CD4-positive, alpha-beta T cell (primary cell): ENCODE measurements at regions of chrX and their contacts with region 1.

Region 1: GRCh38 chrX:130268500-130269170 is at the start of gene ZNF280C:
- DNase-seq: peak; percentile 78 to 95 (median 87)
- ATAC-seq: peak; percentile 96
- H3K4me3 ChIP-seq: peak within 1 kb of the TSS; percentile 77
- H3K4me3 Mint-ChIP-seq: peak within 1 kb of the TSS; percentile 91
- H3K27ac ChIP-seq: peak within 1 kb of the TSS; percentile 29 to 69
- H3K27ac Mint-ChIP-seq: peak within 1 kb of the TSS; percentile 84
- H3K4me1 ChIP-seq: peaks cover 4% of the 10 kb centered on the region
- H3K4me1 Mint-ChIP-seq: peaks cover 19% of the 10 kb centered on the region
- H3K27me3 ChIP-seq: no peaks in the 10 kb centered on the region
- H3K27me3 Mint-ChIP-seq: no peaks in the 10 kb centered on the region
- CTCF ChIP-seq: peak; percentile 31
- total RNA-seq, gene ZNF280C: 3.7 to 4.2 TPM

Region 2: DNA sequence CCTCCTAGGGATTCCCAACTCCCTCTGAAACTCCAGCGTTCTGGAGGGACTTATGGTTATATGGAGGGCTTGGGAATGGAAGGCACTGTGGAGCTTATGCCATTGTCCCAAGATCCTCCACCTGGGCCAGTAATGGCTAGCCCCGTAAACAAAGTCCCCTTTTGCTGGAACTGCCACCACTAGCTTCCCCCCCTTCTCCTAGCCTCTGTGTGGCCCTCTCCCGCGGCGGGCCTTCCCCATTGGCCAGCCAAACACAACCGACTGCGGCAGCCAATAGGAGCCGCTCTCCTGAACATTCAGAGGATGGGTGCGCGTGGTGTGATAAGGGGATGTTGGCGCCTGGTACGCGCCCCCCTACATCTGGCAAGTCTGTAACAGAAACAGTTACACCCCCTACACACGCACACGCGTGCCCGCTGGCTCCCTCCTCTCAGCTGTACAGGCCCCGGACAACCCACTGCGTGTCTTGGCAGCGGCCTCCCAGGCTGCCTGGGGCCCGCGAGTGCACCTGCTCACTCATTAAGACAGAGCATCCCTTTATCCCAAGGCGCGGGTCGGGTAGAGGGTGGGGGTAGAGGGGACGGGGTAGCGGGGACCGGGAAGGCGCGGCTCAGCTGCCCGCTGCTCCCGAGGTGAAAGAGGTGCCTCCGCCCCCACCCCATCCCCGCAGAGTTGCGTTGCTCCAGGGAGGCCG is 97.7 kb before region 1 on chrX:
- CTCF ChIA-PET with region 1: no interaction called
- POLR2A ChIA-PET with region 1: no interaction called
- intact Hi-C with region 1: loop called in 1 of 2 experiments (anchors 5 kb)
- DNase-seq: peak; percentile 24 to 79 (median 54)
- ATAC-seq: peak; percentile 72
- H3K4me3 ChIP-seq: peak overlapping the region; percentile 89
- H3K4me3 Mint-ChIP-seq: peak overlapping the region; percentile 90
- H3K27ac ChIP-seq: peak overlapping the region in 1 of 2 donors; percentile 53
- H3K27ac Mint-ChIP-seq: peak overlapping the region; percentile 91
- H3K4me1 ChIP-seq: peaks cover 40% of the 10 kb centered on the region
- H3K4me1 Mint-ChIP-seq: peaks cover 46% of the 10 kb centered on the region
- H3K27me3 ChIP-seq: no peaks in the 10 kb centered on the region
- H3K27me3 Mint-ChIP-seq: no peaks in the 10 kb centered on the region
- CTCF ChIP-seq: no peak

Region 3: DNA sequence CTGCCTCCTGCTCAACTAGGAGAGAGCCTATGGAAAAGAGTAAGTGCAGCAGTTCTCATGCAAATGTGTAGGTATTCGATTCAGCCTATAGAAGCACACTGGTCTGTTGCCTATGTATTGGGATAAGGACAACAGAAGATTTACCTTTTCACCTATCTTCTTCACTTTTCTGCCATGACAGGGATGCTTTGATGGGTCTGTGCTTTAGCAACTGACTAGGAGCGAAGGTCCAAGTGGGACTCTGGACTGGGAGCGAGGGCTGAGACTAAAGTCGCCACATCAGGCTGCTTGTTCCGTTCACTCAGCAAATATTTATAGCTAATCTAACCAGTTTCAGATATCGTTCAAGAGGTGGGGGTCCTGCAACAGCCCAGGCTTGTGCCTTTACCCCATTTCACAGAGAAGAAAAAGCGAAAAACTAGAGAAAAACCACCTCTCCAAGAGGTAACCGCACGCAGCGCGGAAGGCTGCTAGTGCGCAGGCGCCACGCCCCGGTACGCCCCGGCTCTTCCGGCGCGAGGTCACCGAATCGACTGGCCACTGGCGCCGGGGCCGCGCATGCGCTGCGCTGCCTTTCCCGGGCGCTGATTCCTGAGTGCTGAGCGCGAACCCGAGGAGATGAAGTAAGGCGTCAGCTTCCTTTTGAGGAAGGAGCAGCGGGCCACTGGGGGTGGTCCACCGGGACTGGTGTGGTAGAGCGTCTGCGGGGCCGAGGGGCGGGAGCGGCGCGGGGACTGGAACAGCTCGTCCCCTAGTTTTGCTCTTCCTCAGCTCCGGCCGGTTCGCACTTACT is 133.0 kb after region 1 on chrX and contains the start of gene RBMX2:
- CTCF ChIA-PET with region 1: no interaction called
- POLR2A ChIA-PET with region 1: no interaction called
- intact Hi-C with region 1: loop called in 1 of 2 experiments (anchors 2 kb)
- DNase-seq: peak; percentile 38 to 90 (median 62)
- ATAC-seq: peak; percentile 89
- H3K4me3 ChIP-seq: peak within 1 kb of the TSS; percentile 84
- H3K4me3 Mint-ChIP-seq: peak within 1 kb of the TSS; percentile 93
- H3K27ac ChIP-seq: peak within 1 kb of the TSS; percentile 73 to 74
- H3K27ac Mint-ChIP-seq: peak within 1 kb of the TSS; percentile 88
- H3K4me1 ChIP-seq: peaks cover 14% of the 10 kb centered on the region
- H3K4me1 Mint-ChIP-seq: peaks cover 28% of the 10 kb centered on the region
- H3K27me3 ChIP-seq: no peaks in the 10 kb centered on the region
- H3K27me3 Mint-ChIP-seq: peaks cover 8% of the 10 kb centered on the region
- CTCF ChIP-seq: no peak
- total RNA-seq, gene RBMX2: 20.5 to 21.5 TPM